Naive thymus-derived CD4-positive, alpha-beta T cell (primary cell): ENCODE measurements at regions of chr1 and their contacts with region 1.

Region 1: DNA sequence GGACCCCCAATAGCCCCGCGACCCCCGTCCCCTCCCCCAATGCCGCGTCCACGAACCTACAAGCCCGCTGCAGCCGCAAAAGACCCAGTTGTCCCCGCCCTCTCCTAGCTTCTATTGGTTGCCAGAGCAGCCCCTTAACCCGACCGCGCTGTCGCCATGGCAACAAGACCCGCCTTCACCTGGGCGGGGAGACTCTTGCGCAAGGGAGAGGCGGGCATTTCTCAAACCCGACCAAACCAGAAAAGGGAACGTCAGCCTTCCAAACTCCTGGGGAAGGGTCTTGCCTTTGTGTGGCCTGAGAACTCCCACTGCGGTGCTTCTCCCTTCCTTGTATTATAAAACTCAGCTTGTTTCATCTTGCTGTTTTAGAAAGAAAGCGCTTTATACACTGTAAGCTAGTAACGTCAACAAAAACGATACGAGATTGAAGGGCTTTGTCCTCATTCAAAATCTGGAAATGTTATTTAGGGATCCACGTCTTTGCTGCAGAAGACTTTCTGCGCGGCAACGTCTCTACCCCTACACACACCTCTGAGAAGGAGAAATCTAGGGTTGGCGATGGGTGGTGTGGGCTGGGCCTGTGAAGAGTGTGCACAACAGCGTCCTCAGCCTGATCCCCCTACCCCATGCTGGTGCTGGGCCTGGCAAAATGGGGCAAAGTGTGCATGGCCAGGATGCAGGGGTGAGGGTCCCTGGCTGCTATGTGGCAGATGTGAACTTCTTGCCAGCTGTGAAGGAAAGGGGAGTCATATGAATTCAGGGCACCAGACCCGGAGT is at the start of gene TMEM9:
- DNase-seq: peak; percentile 94 to 99 (median 97)
- ATAC-seq: peak; percentile 97
- H3K4me3 ChIP-seq: peak within 1 kb of the TSS; percentile 48
- H3K4me3 Mint-ChIP-seq: peak within 1 kb of the TSS; percentile 86 to 94 (median 93)
- H3K27ac ChIP-seq: peak within 1 kb of the TSS; percentile 65
- H3K27ac Mint-ChIP-seq: peak within 1 kb of the TSS; percentile 83 to 96 (median 91)
- H3K4me1 ChIP-seq: peaks cover 7 to 14% of the 10 kb centered on the region in 2 donors
- H3K4me1 Mint-ChIP-seq: peaks cover 12 to 36% (median 20%) of the 10 kb centered on the region in 7 donors
- H3K27me3 ChIP-seq: no peaks in the 10 kb centered on the region
- H3K27me3 Mint-ChIP-seq: peaks cover 6 to 25% (median 9%) of the 10 kb centered on the region in 5 donors
- total RNA-seq, gene TMEM9: 15.3 to 24.5 (median 16.7) TPM

Region 2: GRCh38 chr1:200669314-200670241 is 485.0 kb before region 1 on chr1 and contains the start of gene DDX59:
- CTCF ChIA-PET with region 1: no interaction called
- POLR2A ChIA-PET with region 1: no interaction called
- intact Hi-C with region 1: loop called in 1 of 2 experiments (anchors 5 kb)
- DNase-seq: peak; percentile 81 to 95 (median 85)
- ATAC-seq: peak; percentile 92
- H3K4me3 ChIP-seq: peak within 1 kb of the TSS; percentile 93
- H3K4me3 Mint-ChIP-seq: peak within 1 kb of the TSS; percentile 96 to 99 (median 98)
- H3K27ac ChIP-seq: peak within 1 kb of the TSS; percentile 98
- H3K27ac Mint-ChIP-seq: peak within 1 kb of the TSS; percentile 89 to 99 (median 97)
- H3K4me1 ChIP-seq: peaks cover 13 to 16% of the 10 kb centered on the region in 2 donors
- H3K4me1 Mint-ChIP-seq: peaks cover 20 to 60% (median 51%) of the 10 kb centered on the region in 7 donors
- H3K27me3 ChIP-seq: no peaks in the 10 kb centered on the region
- H3K27me3 Mint-ChIP-seq: no peaks in the 10 kb centered on the region
- total RNA-seq, gene DDX59: 20.6 to 41.3 (median 31.1) TPM

Region 3: GRCh38 chr1:200738740-200739498 is 415.7 kb before region 1 on chr1 and contains the start of gene CAMSAP2:
- CTCF ChIA-PET with region 1: no interaction called
- POLR2A ChIA-PET with region 1: no interaction called
- intact Hi-C with region 1: loop called in 1 of 2 experiments (anchors 10 kb)
- DNase-seq: peak; percentile 43 to 76 (median 69)
- ATAC-seq: peak; percentile 80
- H3K4me3 ChIP-seq: peak within 1 kb of the TSS; percentile 74
- H3K4me3 Mint-ChIP-seq: peak within 1 kb of the TSS; percentile 85 to 99 (median 98)
- H3K27ac ChIP-seq: peak within 1 kb of the TSS; percentile 75
- H3K27ac Mint-ChIP-seq: peak within 1 kb of the TSS; percentile 78 to 97 (median 93)
- H3K4me1 ChIP-seq: peaks cover 5 to 23% of the 10 kb centered on the region in 2 donors
- H3K4me1 Mint-ChIP-seq: peaks cover 16 to 49% (median 41%) of the 10 kb centered on the region in 7 donors
- H3K27me3 ChIP-seq: no peaks in the 10 kb centered on the region
- H3K27me3 Mint-ChIP-seq: peaks cover 0 to 45% (median 0%) of the 10 kb centered on the region in 5 donors
- total RNA-seq, gene CAMSAP2: 0.36 to 11.4 (median 5.5) TPM

Region 4: GRCh38 chr1:201170533-201171062 is 16.0 kb after region 1 on chr1:
- CTCF ChIA-PET with region 1: interaction called, 3 read pairs
- POLR2A ChIA-PET with region 1: interaction called, 6 read pairs
- intact Hi-C with region 1: loop called (anchors 1 kb)
- DNase-seq: peak; percentile 38 to 73 (median 50)
- ATAC-seq: peak; percentile 97
- H3K4me3 ChIP-seq: peak overlapping the region; percentile 78
- H3K4me3 Mint-ChIP-seq: peak overlapping the region; percentile 65 to 91 (median 86)
- H3K27ac ChIP-seq: peak overlapping the region; percentile 53
- H3K27ac Mint-ChIP-seq: peak overlapping the region in 7 of 9 donors; percentile 36 to 78 (median 62)
- H3K4me1 ChIP-seq: peaks cover 0 to 7% of the 10 kb centered on the region in 2 donors
- H3K4me1 Mint-ChIP-seq: peaks cover 6 to 14% (median 9%) of the 10 kb centered on the region in 7 donors
- H3K27me3 ChIP-seq: no peaks in the 10 kb centered on the region
- H3K27me3 Mint-ChIP-seq: peaks cover 0 to 42% (median 8%) of the 10 kb centered on the region in 5 donors

Region 5: DNA sequence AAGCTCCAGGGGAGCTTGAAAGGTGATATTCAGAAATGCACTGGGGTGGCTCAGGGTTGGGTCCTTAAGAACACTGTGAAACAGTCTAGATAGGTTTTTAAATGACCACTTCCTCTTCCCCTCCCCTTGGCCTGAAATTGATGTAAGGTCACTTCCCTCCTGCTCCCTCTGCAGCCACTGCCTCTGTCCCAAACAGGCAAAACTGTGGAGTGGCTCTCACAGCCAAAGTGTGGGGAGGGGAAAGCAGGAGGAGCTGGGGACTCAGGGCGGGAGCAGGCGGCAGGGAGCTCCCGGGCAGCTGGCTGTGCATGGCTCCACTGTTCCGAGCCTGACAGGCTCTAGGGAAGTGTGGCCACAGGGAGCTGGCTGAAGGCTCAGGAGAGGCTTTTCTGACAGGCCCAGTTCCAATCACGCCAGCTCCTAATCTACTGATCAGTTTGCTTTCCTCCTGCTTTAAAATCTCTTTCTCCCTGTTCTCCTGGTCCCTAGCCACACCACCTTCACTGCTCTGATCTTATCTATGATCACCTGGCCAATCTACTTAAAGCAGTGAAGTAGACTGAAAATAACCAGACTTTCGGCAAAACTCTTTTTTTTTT is 357.5 kb after region 1 on chr1:
- CTCF ChIA-PET with region 1: no interaction called
- POLR2A ChIA-PET with region 1: no interaction called
- intact Hi-C with region 1: loop called in 1 of 2 experiments (anchors 5 kb)
- DNase-seq: no peak
- ATAC-seq: peak; percentile 14
- H3K4me3 ChIP-seq: no peak overlapping the region
- H3K4me3 Mint-ChIP-seq: no peak overlapping the region
- H3K27ac ChIP-seq: no peak overlapping the region
- H3K27ac Mint-ChIP-seq: no peak overlapping the region
- H3K4me1 ChIP-seq: peaks cover 9 to 10% of the 10 kb centered on the region in 2 donors
- H3K4me1 Mint-ChIP-seq: peaks cover 0 to 28% (median 19%) of the 10 kb centered on the region in 7 donors
- H3K27me3 ChIP-seq: no peaks in the 10 kb centered on the region
- H3K27me3 Mint-ChIP-seq: no peaks in the 10 kb centered on the region

Region 6: GRCh38 chr1:201828820-201829774 is 674.5 kb after region 1 on chr1 and contains the start of gene IPO9:
- CTCF ChIA-PET with region 1: no interaction called
- POLR2A ChIA-PET with region 1: no interaction called
- intact Hi-C with region 1: loop called in 1 of 2 experiments (anchors 2 kb)
- DNase-seq: peak; percentile 89 to 96 (median 95)
- ATAC-seq: peak; percentile 98
- H3K4me3 ChIP-seq: peak within 1 kb of the TSS; percentile 97
- H3K4me3 Mint-ChIP-seq: peak within 1 kb of the TSS; percentile 90 to 100 (median 96)
- H3K27ac ChIP-seq: peak within 1 kb of the TSS; percentile 93
- H3K27ac Mint-ChIP-seq: peak within 1 kb of the TSS; percentile 80 to 97 (median 91)
- H3K4me1 ChIP-seq: peaks cover 16 to 19% of the 10 kb centered on the region in 2 donors
- H3K4me1 Mint-ChIP-seq: peaks cover 29 to 55% (median 41%) of the 10 kb centered on the region in 7 donors
- H3K27me3 ChIP-seq: no peaks in the 10 kb centered on the region
- H3K27me3 Mint-ChIP-seq: no peaks in the 10 kb centered on the region
- total RNA-seq, gene IPO9: 28.7 to 55.3 (median 37.9) TPM